CD8-positive, alpha-beta T cell (primary cell): ENCODE measurements at regions of chr18 and their contacts with region 1.

Region 1: DNA sequence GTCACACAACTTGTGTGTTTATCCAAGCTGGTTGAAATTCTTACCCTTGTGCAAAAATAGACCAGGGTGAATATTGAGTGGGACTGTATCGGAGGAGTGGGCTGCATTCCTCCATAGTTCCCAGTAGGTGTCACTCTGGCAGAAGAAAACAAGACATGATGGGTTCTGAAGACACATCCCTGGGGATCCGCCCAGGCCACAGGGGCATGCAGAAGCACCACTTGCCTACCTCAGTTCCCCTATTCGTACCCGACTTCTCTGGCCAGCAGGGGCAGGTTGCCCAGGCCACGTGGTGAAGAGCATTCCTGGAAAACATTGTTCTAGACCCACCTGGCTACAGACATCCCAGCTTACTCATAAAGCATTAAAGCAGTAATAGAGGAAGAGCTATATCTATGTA is 168.2 kb downstream of the FAM210A start:
- DNase-seq: peak in 7 of 9 experiments; percentile 18 to 60 (median 39)
- ATAC-seq: peak; percentile 54
- H3K4me3 ChIP-seq: no peak overlapping the region
- H3K4me3 Mint-ChIP-seq: no peak overlapping the region
- H3K27ac ChIP-seq: no peak overlapping the region
- H3K27ac Mint-ChIP-seq: no peak overlapping the region
- H3K4me1 ChIP-seq: peaks cover 7% of the 10 kb centered on the region
- H3K4me1 Mint-ChIP-seq: peaks cover 18% of the 10 kb centered on the region
- H3K27me3 ChIP-seq: no peaks in the 10 kb centered on the region
- H3K27me3 Mint-ChIP-seq: no peaks in the 10 kb centered on the region
- CTCF ChIP-seq: peak; percentile 68

Region 2: GRCh38 chr18:13318731-13319501 is 239.2 kb before region 1 on chr18:
- CTCF ChIA-PET with region 1: no interaction called
- POLR2A ChIA-PET with region 1: no interaction called
- intact Hi-C with region 1: no loop called
- DNase-seq: no peak
- ATAC-seq: no peak
- H3K4me3 ChIP-seq: no peak overlapping the region
- H3K4me3 Mint-ChIP-seq: no peak overlapping the region
- H3K27ac ChIP-seq: no peak overlapping the region
- H3K27ac Mint-ChIP-seq: no peak overlapping the region
- H3K4me1 ChIP-seq: peaks cover 7% of the 10 kb centered on the region
- H3K4me1 Mint-ChIP-seq: peaks cover 8% of the 10 kb centered on the region
- H3K27me3 ChIP-seq: no peaks in the 10 kb centered on the region
- H3K27me3 Mint-ChIP-seq: no peaks in the 10 kb centered on the region
- CTCF ChIP-seq: no peak

Region 3: DNA sequence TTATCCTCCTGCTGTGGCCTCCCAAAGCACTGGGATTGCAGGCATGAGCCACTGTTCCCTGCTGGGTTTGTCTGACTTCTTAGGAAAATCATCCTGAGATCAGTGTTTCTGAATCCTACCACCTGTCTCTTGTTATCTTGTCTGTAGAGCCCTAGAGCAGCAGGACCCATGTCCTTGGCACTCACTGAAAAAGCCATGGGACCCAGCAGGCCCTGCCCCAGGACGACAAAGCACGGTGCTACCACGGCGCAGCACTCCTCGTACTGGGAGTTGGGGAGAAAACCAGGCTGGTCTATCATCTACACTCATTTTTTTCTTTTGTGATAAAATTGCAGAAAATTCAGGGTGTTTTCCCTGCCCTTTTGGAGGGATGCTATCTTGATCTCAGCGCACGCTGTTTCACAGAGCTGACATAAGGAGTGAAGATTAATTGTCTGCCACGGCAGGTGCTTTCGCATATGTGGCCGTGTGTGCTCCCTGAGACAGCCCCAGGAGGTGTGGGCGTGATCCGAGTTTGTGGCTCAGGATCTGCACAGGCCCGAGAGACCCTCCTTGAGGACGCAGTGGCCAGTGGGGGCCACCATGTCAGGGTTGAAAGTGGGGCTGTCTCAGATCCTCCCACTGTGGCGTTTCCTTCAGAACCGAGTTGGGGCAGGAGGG is 160.5 kb before region 1 on chr18:
- CTCF ChIA-PET with region 1: no interaction called
- POLR2A ChIA-PET with region 1: no interaction called
- intact Hi-C with region 1: no loop called
- DNase-seq: peak in 2 of 9 experiments; percentile 7 to 27
- ATAC-seq: no peak
- H3K4me3 ChIP-seq: no peak overlapping the region
- H3K4me3 Mint-ChIP-seq: no peak overlapping the region
- H3K27ac ChIP-seq: no peak overlapping the region
- H3K27ac Mint-ChIP-seq: no peak overlapping the region
- H3K4me1 ChIP-seq: peaks cover 14% of the 10 kb centered on the region
- H3K4me1 Mint-ChIP-seq: peaks cover 35% of the 10 kb centered on the region
- H3K27me3 ChIP-seq: no peaks in the 10 kb centered on the region
- H3K27me3 Mint-ChIP-seq: no peaks in the 10 kb centered on the region
- CTCF ChIP-seq: no peak

Region 4: GRCh38 chr18:13539050-13539449 is 19.1 kb before region 1 on chr18:
- CTCF ChIA-PET with region 1: interaction called, 19 read pairs
- POLR2A ChIA-PET with region 1: no interaction called
- intact Hi-C with region 1: loop called in 1 of 2 experiments (anchors 2 kb)
- DNase-seq: peak; percentile 15 to 89 (median 64)
- ATAC-seq: peak; percentile 91
- H3K4me3 ChIP-seq: peak overlapping the region in 1 of 2 experiments; percentile 6
- H3K4me3 Mint-ChIP-seq: peak overlapping the region; percentile 63
- H3K27ac ChIP-seq: peak overlapping the region; percentile 63 to 83
- H3K27ac Mint-ChIP-seq: peak overlapping the region; percentile 91
- H3K4me1 ChIP-seq: peaks cover 66% of the 10 kb centered on the region
- H3K4me1 Mint-ChIP-seq: peaks cover 85% of the 10 kb centered on the region
- H3K27me3 ChIP-seq: no peaks in the 10 kb centered on the region
- H3K27me3 Mint-ChIP-seq: no peaks in the 10 kb centered on the region
- CTCF ChIP-seq: no peak

Region 5: DNA sequence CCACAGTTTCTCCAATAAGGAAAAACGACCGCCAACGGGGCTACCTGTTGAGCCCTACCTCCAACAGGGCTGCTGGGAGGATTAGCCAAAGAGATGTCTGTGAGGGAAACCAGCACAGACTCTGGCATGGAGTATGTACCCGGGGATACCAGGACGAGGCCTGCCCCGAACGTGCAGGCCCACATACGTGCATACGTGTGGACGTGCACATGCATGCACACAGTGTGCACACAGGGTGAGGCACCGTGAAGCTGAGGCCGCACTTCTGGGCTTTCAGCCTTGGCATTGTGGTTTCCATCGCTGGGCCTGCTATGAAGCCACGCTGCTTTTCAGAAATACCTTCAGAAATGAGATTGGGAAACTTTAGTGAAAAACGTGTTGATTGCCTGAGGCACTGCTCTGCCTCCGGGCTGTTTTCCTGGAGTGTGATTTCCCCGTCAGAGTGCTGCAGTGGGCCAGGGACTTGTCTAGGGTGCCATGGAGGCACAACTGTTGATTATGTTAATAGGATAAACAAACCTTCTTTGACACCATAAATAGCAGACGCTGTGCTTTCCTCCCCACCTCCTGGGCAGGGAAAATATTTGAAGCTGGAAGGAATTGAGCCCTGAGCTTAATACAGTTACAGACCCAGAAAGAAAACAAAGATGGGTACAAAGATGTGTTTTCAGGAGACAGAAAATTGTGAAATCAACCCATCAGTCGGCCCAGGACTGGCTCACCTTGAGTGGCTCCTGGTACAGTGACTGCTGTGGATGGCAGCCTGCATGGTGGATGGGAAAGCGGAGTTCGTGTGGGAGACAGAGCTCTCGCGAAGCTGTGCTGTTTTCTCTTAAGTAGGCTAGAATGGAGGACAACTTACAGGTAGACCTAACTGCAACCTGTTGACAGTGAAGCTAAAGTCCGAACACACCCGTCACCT is 14.1 kb before region 1 on chr18:
- CTCF ChIA-PET with region 1: interaction called, 19 read pairs
- POLR2A ChIA-PET with region 1: no interaction called
- intact Hi-C with region 1: loop called in 1 of 2 experiments (anchors 2 kb)
- DNase-seq: peak in 1 of 9 experiments; percentile 35
- ATAC-seq: no peak
- H3K4me3 ChIP-seq: no peak overlapping the region
- H3K4me3 Mint-ChIP-seq: no peak overlapping the region
- H3K27ac ChIP-seq: no peak overlapping the region
- H3K27ac Mint-ChIP-seq: no peak overlapping the region
- H3K4me1 ChIP-seq: peaks cover 33% of the 10 kb centered on the region
- H3K4me1 Mint-ChIP-seq: peaks cover 54% of the 10 kb centered on the region
- H3K27me3 ChIP-seq: no peaks in the 10 kb centered on the region
- H3K27me3 Mint-ChIP-seq: no peaks in the 10 kb centered on the region
- CTCF ChIP-seq: no peak

Region 6: DNA sequence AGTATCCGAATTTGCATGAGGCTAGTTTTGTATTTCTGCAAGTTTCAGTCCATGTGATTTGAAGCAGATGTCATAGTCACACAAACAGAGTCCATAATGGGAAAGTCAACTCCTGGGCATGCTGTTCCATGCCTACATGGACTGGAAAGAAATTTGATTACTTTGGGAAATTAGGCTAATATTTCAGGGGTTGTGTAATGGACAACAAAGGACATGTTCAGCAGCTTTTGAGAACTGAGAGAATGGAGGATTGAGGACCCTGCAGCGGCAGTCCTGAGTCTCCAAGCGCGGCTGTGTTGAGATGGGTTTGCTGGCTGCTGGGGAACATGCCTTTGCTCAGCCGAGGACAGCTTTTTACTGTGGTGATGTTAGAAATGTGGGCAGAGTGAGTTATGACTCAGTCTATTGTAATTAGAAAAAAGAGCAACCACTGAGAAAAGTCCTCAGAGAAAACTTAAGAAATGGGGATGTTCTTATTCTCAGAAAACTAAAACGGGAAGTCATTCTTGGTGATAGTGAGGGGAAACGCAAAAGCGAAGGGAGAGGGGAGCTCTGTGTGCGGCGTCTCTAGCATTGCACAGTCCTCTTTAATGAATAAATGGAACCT is 19.1 kb after region 1 on chr18:
- CTCF ChIA-PET with region 1: interaction called, 13 read pairs
- POLR2A ChIA-PET with region 1: no interaction called
- intact Hi-C with region 1: loop called in 1 of 2 experiments (anchors 2 kb)
- DNase-seq: peak in 3 of 9 experiments; percentile 10 to 39 (median 35)
- ATAC-seq: peak; percentile 78
- H3K4me3 ChIP-seq: no peak overlapping the region
- H3K4me3 Mint-ChIP-seq: peak overlapping the region; percentile 69
- H3K27ac ChIP-seq: no peak overlapping the region
- H3K27ac Mint-ChIP-seq: peak overlapping the region; percentile 24
- H3K4me1 ChIP-seq: peaks cover 25% of the 10 kb centered on the region
- H3K4me1 Mint-ChIP-seq: peaks cover 40% of the 10 kb centered on the region
- H3K27me3 ChIP-seq: no peaks in the 10 kb centered on the region
- H3K27me3 Mint-ChIP-seq: no peaks in the 10 kb centered on the region
- CTCF ChIP-seq: no peak

Region 7: GRCh38 chr18:13813271-13813849 is 255.2 kb after region 1 on chr18:
- CTCF ChIA-PET with region 1: interaction called, 4 read pairs
- POLR2A ChIA-PET with region 1: no interaction called
- intact Hi-C with region 1: loop called in 1 of 2 experiments (anchors 5 kb)
- DNase-seq: peak in 8 of 9 experiments; percentile 18 to 67 (median 54)
- ATAC-seq: peak; percentile 72
- H3K4me3 ChIP-seq: no peak overlapping the region
- H3K4me3 Mint-ChIP-seq: no peak overlapping the region
- H3K27ac ChIP-seq: no peak overlapping the region
- H3K27ac Mint-ChIP-seq: no peak overlapping the region
- H3K4me1 ChIP-seq: no peaks in the 10 kb centered on the region
- H3K4me1 Mint-ChIP-seq: no peaks in the 10 kb centered on the region
- H3K27me3 ChIP-seq: no peaks in the 10 kb centered on the region
- H3K27me3 Mint-ChIP-seq: no peaks in the 10 kb centered on the region
- CTCF ChIP-seq: peak; percentile 82